ENCODE measurements at regions of chr21 and their contacts with region 1.

Region 1: GRCh38 chr21:16082038-16082816 is 352.4 kb downstream of the USP25 start:
- DNase-seq: no peak
- ATAC-seq: no peak
- H3K4me3 ChIP-seq: peak overlapping the region in 1 of 4 donors; percentile 0
- H3K27ac ChIP-seq: no peak overlapping the region
- H3K4me1 ChIP-seq: peaks cover 3 to 4% of the 10 kb centered on the region in 2 donors
- H3K27me3 ChIP-seq: no peaks in the 10 kb centered on the region
- CTCF ChIP-seq: peak in 4 of 5 experiments; percentile 29 to 61 (median 46)
- POLR2A ChIP-seq: no peak

Region 2: DNA sequence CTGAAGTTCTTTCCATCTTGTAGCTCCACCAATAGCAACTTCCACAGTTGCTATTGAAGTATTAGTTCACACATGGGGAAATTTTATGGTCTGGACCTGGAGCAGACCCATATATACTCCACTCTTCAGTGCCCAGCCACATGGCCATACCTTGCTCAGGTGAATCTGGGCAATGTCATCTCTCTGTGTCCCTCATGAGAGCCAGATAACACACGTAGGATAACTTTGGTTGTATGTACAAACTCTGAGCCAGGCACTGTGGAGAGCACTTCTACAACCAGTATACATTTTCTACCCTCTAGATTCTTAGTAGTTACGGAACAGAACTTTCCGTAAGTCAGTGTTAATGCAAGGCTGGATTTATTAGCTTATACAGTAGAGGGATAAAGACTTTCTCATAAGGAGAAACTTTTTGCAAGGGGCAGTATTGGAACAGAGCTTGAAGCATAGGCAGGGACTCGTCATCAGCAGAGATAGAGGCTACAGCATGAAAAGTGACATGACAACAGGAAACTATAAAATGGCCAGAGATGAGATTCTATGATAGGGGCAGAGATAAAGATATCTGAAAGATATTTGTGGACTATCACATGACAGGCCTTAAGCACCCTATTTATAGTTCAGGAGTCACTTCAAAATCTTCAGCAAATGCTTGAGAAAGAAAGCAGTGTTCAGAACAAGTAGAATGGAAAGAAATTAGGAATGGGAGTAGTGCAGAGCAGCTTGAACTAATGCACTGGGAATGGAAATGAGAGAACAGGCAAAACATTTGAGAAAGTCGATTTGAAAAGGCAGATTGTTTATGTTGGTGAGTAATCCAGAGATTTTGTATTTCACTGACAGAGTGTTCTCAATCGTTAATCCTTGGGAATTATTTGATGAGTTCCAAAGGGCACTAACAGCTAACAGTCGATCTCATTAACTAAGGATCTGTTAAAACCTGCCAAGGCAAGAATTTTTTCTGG is 129.4 kb after region 1 on chr21:
- in situ Hi-C with region 1: loop called in 1 of 4 experiments (anchors 10 kb)
- intact Hi-C with region 1: no loop called
- DNase-seq: no peak
- ATAC-seq: peak; percentile 86 to 92
- H3K4me3 ChIP-seq: peak overlapping the region; percentile 39 to 58 (median 48)
- H3K27ac ChIP-seq: peak overlapping the region; percentile 83 to 93 (median 87)
- H3K4me1 ChIP-seq: peaks cover 6 to 34% of the 10 kb centered on the region in 2 donors
- H3K27me3 ChIP-seq: no peaks in the 10 kb centered on the region
- CTCF ChIP-seq: no peak
- POLR2A ChIP-seq: peak in 1 of 2 donors; percentile 60

Region 3: GRCh38 chr21:16330082-16330907 is 248.1 kb after region 1 on chr21:
- in situ Hi-C with region 1: loop called (anchors 5 to 10 kb)
- intact Hi-C with region 1: loop called (anchors 1 kb)
- DNase-seq: peak in 1 of 2 donors; percentile 26
- ATAC-seq: peak; percentile 98 to 99
- H3K4me3 ChIP-seq: no peak overlapping the region
- H3K27ac ChIP-seq: peak overlapping the region in 1 of 4 donors; percentile 13
- H3K4me1 ChIP-seq: peaks cover 0 to 11% of the 10 kb centered on the region in 2 donors
- H3K27me3 ChIP-seq: no peaks in the 10 kb centered on the region
- CTCF ChIP-seq: peak; percentile 59 to 79 (median 70)
- POLR2A ChIP-seq: no peak

Region 4: GRCh38 chr21:16534408-16535101 is 452.3 kb after region 1 on chr21:
- in situ Hi-C with region 1: loop called in 1 of 4 experiments (anchors 25 kb)
- intact Hi-C with region 1: loop called (anchors 2 kb)
- DNase-seq: peak; percentile 66 to 75
- ATAC-seq: peak; percentile 68 to 69
- H3K4me3 ChIP-seq: peak overlapping the region; percentile 47 to 64 (median 58)
- H3K27ac ChIP-seq: peak overlapping the region; percentile 84 to 90 (median 88)
- H3K4me1 ChIP-seq: peaks cover 17 to 27% of the 10 kb centered on the region in 2 donors
- H3K27me3 ChIP-seq: no peaks in the 10 kb centered on the region
- CTCF ChIP-seq: peak in 1 of 5 experiments; percentile 9
- POLR2A ChIP-seq: no peak

Region 5: GRCh38 chr21:17045214-17045853 is 963.1 kb after region 1 on chr21:
- in situ Hi-C with region 1: no loop called
- intact Hi-C with region 1: loop called (anchors 10 kb)
- DNase-seq: no peak
- ATAC-seq: no peak
- H3K4me3 ChIP-seq: no peak overlapping the region
- H3K27ac ChIP-seq: no peak overlapping the region
- H3K4me1 ChIP-seq: no peaks in the 10 kb centered on the region
- H3K27me3 ChIP-seq: no peaks in the 10 kb centered on the region
- CTCF ChIP-seq: peak in 2 of 5 experiments; percentile 8 to 44
- POLR2A ChIP-seq: no peak